ENCODE measurements at regions of chr4 and their contacts with region 1.

Region 1: DNA sequence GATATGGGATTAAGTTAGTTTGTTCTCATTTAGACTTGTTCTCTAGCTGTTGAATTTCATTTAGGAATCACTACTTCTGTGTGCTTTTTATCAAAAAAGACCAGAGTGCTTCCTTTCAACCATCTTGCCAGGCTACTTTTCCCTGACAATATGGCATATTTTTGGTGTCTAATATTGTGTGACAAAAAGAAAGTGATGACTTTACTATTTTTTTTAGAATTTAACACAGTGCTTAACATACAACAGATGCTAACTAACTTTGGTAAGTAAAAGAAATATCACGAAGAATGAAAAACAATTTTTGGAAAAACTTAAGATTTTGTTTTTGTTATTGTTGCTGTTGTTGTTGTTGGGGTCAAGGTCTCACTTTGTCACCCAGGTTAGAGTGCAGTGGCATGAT is 462.2 kb upstream of the PABPC4L start:
- DNase-seq: no peak
- H3K4me3 ChIP-seq: no peak overlapping the region
- CTCF ChIP-seq: no peak
- POLR2A ChIP-seq: no peak

Region 2: DNA sequence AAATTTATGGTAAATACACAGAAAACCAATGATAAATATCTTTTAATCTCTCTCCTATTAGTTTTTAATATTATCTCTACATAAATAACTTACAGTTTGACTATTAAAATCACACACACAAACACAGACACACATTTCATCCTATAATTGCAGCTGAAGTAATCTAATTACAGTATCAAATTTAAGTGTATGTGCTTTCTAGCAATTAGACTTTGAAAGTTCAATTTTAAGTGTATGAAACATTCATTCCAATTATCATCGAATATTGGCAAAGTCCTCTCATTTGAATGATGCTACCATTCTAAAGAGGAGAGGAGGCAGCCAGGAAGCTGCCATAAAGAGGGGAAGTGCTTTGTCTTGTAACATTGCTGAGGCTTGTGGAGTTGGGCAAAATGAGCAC is 241.0 kb before region 1 on chr4:
- intact Hi-C with region 1: no loop called
- DNase-seq: no peak
- H3K4me3 ChIP-seq: no peak overlapping the region
- CTCF ChIP-seq: no peak
- POLR2A ChIP-seq: no peak

Region 3: GRCh38 chr4:134585972-134586371 is 77.8 kb before region 1 on chr4:
- intact Hi-C with region 1: no loop called
- DNase-seq: no peak
- H3K4me3 ChIP-seq: no peak overlapping the region
- CTCF ChIP-seq: no peak
- POLR2A ChIP-seq: no peak

Region 4: GRCh38 chr4:135804785-135805184 is 1141.0 kb after region 1 on chr4:
- intact Hi-C with region 1: loop called (anchors 5 kb)
- DNase-seq: no peak
- H3K4me3 ChIP-seq: no peak overlapping the region
- CTCF ChIP-seq: no peak
- POLR2A ChIP-seq: no peak

Measured in lower leg skin (tissue), 4 donors.